ENCODE measurements at regions of chr12 and their contacts with region 1.

Region 1: GRCh38 chr12:104456417-104456949 is at the start of gene CHST11:
- DNase-seq: peak; percentile 95 to 96
- ATAC-seq: peak; percentile 95
- H3K4me3 ChIP-seq: peak within 1 kb of the TSS; percentile 66 to 90
- H3K27ac ChIP-seq: peak within 1 kb of the TSS; percentile 58 to 73
- H3K4me1 ChIP-seq: no peaks in the 10 kb centered on the region
- H3K27me3 ChIP-seq: no peaks in the 10 kb centered on the region
- total RNA-seq, gene CHST11: 27.2 to 31.0 TPM

Region 2: GRCh38 chr12:104381731-104382480 is 74.6 kb before region 1 on chr12:
- intact Hi-C with region 1: loop called in 1 of 2 experiments (anchors 5 kb)
- DNase-seq: peak; percentile 78 to 90
- ATAC-seq: peak; percentile 91
- H3K4me3 ChIP-seq: no peak overlapping the region
- H3K27ac ChIP-seq: no peak overlapping the region
- H3K4me1 ChIP-seq: no peaks in the 10 kb centered on the region
- H3K27me3 ChIP-seq: no peaks in the 10 kb centered on the region

Region 3: DNA sequence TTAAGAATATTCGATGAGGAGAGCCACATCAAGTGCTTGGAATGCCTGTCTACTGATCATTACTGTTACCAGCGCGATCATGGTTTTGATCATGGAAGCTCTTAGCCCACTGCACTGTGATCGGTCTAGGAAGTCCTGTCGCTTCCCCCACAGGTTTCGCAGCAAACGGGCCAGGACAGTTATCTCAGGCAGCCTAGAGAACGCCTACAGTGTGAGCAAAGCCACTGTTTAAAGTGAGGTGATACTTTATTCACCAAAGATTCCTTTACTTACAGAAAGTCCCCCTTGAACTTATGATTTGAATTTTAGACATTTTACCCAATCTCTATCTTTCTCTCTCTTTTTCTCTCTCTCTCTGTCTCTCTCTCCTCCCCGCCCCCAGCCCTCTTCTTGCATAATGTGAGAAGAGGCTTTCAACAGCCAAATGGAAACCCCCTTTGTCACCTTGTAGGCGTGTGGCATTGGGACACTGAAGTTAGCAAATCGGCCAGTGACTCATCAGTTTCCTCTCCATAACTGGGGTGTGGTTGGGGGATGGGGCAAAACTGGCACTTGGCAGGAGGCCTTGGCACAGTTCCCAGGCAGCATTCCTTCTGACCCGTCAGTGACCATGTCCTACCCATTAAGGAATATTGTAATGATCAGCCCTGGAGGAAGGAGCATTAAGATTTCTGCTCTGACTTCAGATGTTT is 215.1 kb after region 1 on chr12:
- intact Hi-C with region 1: loop called in 1 of 2 experiments (anchors 5 kb)
- DNase-seq: peak; percentile 94 to 96
- ATAC-seq: peak; percentile 67
- H3K4me3 ChIP-seq: no peak overlapping the region
- H3K27ac ChIP-seq: peak overlapping the region in 1 of 2 donors; percentile 58
- H3K4me1 ChIP-seq: peaks cover 0 to 13% of the 10 kb centered on the region in 2 donors
- H3K27me3 ChIP-seq: no peaks in the 10 kb centered on the region

Region 4: GRCh38 chr12:104790296-104791125 is 334.0 kb after region 1 on chr12:
- intact Hi-C with region 1: loop called in 1 of 2 experiments (anchors 5 kb)
- DNase-seq: peak; percentile 53 to 87
- ATAC-seq: no peak
- H3K4me3 ChIP-seq: no peak overlapping the region
- H3K27ac ChIP-seq: no peak overlapping the region
- H3K4me1 ChIP-seq: peaks cover 0 to 2% of the 10 kb centered on the region in 2 donors
- H3K27me3 ChIP-seq: no peaks in the 10 kb centered on the region

Region 5: DNA sequence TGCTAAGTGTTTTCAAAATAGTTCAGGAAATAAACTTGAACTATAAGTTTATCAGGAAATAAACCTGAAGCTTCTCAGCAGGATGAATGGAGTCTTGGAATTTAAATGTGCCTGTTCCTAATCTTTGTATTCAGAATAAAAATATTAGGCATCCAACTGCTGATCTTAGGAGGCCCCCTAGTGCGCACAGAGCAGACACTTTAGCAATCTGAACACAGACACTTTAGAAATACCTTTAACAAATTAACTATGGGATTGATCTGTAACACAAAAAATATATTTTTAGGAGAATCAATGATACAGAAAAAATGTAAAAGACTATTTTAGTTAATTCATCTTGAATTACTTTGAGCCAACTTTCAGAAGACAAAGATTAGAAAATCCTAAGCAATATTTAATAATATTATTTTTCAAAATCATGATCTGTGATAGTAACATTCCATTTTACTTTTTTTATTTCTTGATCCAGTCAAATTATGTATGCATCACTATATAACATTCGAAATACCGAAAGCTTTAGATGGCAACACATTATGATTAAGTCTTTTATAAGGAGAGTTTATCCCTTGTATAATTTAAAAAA is 420.7 kb after region 1 on chr12:
- intact Hi-C with region 1: loop called (anchors 5 kb)
- DNase-seq: no peak
- ATAC-seq: peak; percentile 74
- H3K4me3 ChIP-seq: no peak overlapping the region
- H3K27ac ChIP-seq: no peak overlapping the region
- H3K4me1 ChIP-seq: no peaks in the 10 kb centered on the region
- H3K27me3 ChIP-seq: no peaks in the 10 kb centered on the region

Measured in aorta (tissue), 5 donors.